Caco-2 (cell line): ENCODE measurements at regions of chr3 and their contacts with region 1.

Region 1: DNA sequence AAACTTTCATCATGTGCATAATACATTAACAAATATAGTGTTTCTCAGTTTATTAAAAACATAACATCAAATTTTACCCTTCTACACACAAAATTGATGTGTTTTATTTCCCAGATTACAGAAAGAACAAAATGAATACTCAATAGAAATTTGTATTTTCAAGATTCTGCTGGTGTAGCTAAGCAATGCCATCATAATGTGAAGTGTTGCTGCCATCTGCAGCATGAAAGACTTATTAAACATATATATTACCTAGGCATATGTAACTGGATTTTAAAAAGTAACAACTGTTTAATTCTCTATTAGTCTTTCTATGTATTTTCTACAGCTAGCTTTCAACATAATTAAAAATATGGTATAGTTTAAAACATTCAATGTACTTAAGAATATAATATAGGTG is 27.5 kb downstream of the PLSCR5 start:
- DNase-seq: peak in 1 of 2 experiments; percentile 11
- H3K4me3 ChIP-seq: no peak overlapping the region
- H3K4me3 Mint-ChIP-seq: no peak overlapping the region
- H3K27ac Mint-ChIP-seq: no peak overlapping the region
- H3K4me1 ChIP-seq: peaks cover 26% of the 10 kb centered on the region
- H3K4me1 Mint-ChIP-seq: peaks cover 27% of the 10 kb centered on the region
- H3K27me3 ChIP-seq: no peaks in the 10 kb centered on the region
- H3K27me3 Mint-ChIP-seq: no peaks in the 10 kb centered on the region
- CTCF ChIP-seq: peak; percentile 19 to 36

Region 2: GRCh38 chr3:146189519-146190173 is 388.0 kb before region 1 on chr3:
- CTCF ChIA-PET with region 1: interaction called, 10 read pairs
- POLR2A ChIA-PET with region 1: no interaction called
- intact Hi-C with region 1: loop called (anchors 1 kb)
- DNase-seq: peak in 1 of 2 experiments; percentile 43
- H3K4me3 ChIP-seq: no peak overlapping the region
- H3K4me3 Mint-ChIP-seq: no peak overlapping the region
- H3K27ac Mint-ChIP-seq: no peak overlapping the region
- H3K4me1 ChIP-seq: no peaks in the 10 kb centered on the region
- H3K4me1 Mint-ChIP-seq: no peaks in the 10 kb centered on the region
- H3K27me3 ChIP-seq: no peaks in the 10 kb centered on the region
- H3K27me3 Mint-ChIP-seq: no peaks in the 10 kb centered on the region
- CTCF ChIP-seq: peak; percentile 71 to 81

Region 3: DNA sequence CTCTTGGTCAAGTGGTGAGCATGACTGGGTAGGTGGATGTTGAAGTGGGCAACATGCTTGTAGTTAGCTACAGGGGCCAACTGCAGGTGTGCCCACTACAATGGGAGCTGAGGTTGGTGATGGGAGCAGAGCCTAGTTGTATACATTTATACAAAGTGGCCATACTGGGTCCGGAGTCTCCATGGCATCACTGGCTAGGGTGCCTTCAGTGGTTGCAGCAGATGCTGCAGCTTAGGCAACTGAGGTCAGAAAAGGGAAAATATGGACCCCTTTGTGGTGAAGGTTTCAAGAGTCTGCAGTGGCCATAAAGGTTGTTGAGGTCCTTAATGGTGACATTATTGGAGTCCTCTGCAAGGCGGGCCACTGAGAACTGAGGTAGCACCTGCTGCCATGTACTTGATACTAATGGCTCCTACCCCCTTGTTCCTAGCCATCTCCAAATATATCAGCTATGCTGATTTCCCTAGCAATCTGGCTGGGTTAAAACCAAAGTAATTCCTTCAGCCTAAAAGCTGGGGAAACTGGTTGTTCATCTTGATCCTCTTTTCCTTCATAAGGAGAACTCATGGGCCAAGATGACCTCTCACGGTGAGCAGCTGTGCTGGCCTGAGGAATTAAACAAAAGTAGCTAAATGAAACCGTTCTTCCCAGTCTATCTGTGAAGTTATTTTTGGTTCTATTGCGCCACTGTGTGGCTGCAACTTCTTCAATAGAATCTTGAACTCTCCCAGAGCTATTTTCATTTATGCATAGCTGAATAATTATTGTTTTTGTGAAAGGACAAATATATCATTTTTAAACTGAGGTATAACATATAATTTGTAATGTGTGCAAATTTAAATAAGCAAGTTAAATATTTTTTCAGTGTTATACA is 250.8 kb before region 1 on chr3:
- CTCF ChIA-PET with region 1: interaction called, 5 read pairs
- POLR2A ChIA-PET with region 1: no interaction called
- intact Hi-C with region 1: loop called (anchors 1 kb)
- DNase-seq: peak; percentile 39 to 42
- H3K4me3 ChIP-seq: no peak overlapping the region
- H3K4me3 Mint-ChIP-seq: no peak overlapping the region
- H3K27ac Mint-ChIP-seq: no peak overlapping the region
- H3K4me1 ChIP-seq: no peaks in the 10 kb centered on the region
- H3K4me1 Mint-ChIP-seq: peaks cover 6% of the 10 kb centered on the region
- H3K27me3 ChIP-seq: no peaks in the 10 kb centered on the region
- H3K27me3 Mint-ChIP-seq: no peaks in the 10 kb centered on the region
- CTCF ChIP-seq: peak; percentile 42

Region 4: DNA sequence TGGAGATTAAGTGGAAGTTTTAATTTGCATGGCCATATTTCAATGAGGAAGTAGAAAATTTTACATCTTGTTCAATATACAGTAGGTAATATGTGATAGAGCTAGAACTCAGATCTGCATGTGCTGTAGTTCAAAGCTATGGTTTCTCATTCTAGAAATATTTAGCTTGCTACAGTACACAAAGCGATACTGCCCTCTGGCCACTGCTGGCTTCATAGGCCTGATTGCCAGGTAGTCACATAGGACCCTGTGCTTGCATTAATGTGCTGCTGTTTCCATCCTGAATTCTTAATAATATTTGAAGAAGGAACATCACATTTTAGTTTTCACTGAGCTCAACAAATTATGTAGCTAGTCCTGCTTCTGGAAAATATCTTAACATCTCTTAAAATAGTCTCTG is 195.3 kb before region 1 on chr3:
- CTCF ChIA-PET with region 1: no interaction called
- POLR2A ChIA-PET with region 1: no interaction called
- intact Hi-C with region 1: loop called (anchors 2 kb)
- DNase-seq: peak; percentile 34 to 45
- H3K4me3 ChIP-seq: no peak overlapping the region
- H3K4me3 Mint-ChIP-seq: no peak overlapping the region
- H3K27ac Mint-ChIP-seq: no peak overlapping the region
- H3K4me1 ChIP-seq: no peaks in the 10 kb centered on the region
- H3K4me1 Mint-ChIP-seq: peaks cover 7% of the 10 kb centered on the region
- H3K27me3 ChIP-seq: no peaks in the 10 kb centered on the region
- H3K27me3 Mint-ChIP-seq: no peaks in the 10 kb centered on the region
- CTCF ChIP-seq: peak; percentile 35 to 66

Region 5: DNA sequence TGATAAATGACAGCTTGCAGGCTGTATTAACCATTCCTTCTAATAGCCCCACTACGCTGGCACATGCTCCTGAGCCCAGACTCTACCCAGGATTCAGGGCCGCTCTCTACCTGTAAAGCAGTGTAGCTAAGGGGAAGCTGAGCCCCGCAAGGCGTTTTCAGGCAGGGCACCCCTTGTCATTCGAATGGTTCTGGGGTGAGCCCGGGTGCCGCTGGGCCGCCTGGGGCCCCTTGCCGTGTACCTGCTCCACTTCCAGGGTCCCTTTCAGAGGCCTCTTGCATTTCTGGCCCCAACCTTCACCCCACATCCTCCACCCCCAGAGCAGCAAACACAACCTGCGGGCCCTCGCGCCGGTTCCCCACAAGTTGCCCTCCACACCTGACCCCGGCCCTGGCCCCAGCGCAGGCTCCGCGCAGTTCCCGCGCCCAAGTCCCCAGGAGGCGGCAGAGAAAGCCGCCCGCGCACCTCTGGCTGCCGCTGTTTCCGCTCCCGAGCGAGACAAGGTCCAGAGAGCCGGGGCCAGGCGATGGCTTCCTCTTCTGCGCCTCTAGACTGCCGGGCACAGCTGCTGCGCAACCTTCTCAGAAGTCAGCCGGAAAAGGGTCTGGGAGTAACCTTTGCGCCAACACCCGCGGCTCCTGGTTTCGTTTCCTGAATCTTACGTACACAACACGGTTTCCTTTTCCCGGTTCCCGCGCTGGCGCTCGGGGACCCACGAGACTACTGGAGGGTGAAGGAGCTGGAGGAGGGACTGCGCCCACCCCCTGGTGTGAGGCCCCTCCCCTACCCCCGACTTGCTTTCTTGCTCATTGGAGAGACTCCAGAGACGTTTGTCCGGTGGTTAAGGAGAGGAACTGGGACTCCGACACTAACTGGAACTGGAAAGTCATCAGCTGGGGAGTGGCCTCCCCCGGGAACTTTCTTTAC is 33.4 kb before region 1 on chr3 and contains the start of gene PLSCR1:
- CTCF ChIA-PET with region 1: interaction called, 5 read pairs
- POLR2A ChIA-PET with region 1: interaction called, 8 read pairs
- intact Hi-C with region 1: loop called (anchors 1 kb)
- DNase-seq: peak; percentile 91 to 96
- H3K4me3 ChIP-seq: peak within 1 kb of the TSS; percentile 65
- H3K4me3 Mint-ChIP-seq: peak within 1 kb of the TSS; percentile 91
- H3K27ac Mint-ChIP-seq: peak within 1 kb of the TSS; percentile 97
- H3K4me1 ChIP-seq: 0 out of 2 replicates have a peak, but pooled peaks cover 8% of the 10 kb centered on the region
- H3K4me1 Mint-ChIP-seq: peaks cover 25% of the 10 kb centered on the region
- H3K27me3 ChIP-seq: no peaks in the 10 kb centered on the region
- H3K27me3 Mint-ChIP-seq: no peaks in the 10 kb centered on the region
- CTCF ChIP-seq: no peak
- total RNA-seq, gene PLSCR1: 112 and 116 TPM in 2 replicates